ENCODE measurements at regions of chr16 and their contacts with region 1.

Region 1: GRCh38 chr16:21590287-21590686 is 9.1 kb upstream of the METTL9 start:
- DNase-seq: no peak
- H3K4me3 ChIP-seq: no peak overlapping the region
- H3K27ac ChIP-seq: peak overlapping the region in 4 of 5 donors; percentile 51 to 62 (median 53)
- H3K4me1 ChIP-seq: peaks cover 24 to 37% of the 10 kb centered on the region in 2 donors
- H3K27me3 ChIP-seq: no peaks in the 10 kb centered on the region
- CTCF ChIP-seq: no peak
- POLR2A ChIP-seq: no peak

Region 2: GRCh38 chr16:21713549-21714368 is 123.5 kb after region 1 on chr16:
- intact Hi-C with region 1: loop called in 1 of 2 experiments (anchors 5 kb)
- DNase-seq: no peak
- H3K4me3 ChIP-seq: no peak overlapping the region
- H3K27ac ChIP-seq: no peak overlapping the region
- H3K4me1 ChIP-seq: no peaks in the 10 kb centered on the region
- H3K27me3 ChIP-seq: no peaks in the 10 kb centered on the region
- CTCF ChIP-seq: no peak
- POLR2A ChIP-seq: no peak

Measured in adrenal gland (tissue), 19 donors.